PC-3 (cell line): ENCODE measurements at regions of chr7 and their contacts with region 1.

Region 1: DNA sequence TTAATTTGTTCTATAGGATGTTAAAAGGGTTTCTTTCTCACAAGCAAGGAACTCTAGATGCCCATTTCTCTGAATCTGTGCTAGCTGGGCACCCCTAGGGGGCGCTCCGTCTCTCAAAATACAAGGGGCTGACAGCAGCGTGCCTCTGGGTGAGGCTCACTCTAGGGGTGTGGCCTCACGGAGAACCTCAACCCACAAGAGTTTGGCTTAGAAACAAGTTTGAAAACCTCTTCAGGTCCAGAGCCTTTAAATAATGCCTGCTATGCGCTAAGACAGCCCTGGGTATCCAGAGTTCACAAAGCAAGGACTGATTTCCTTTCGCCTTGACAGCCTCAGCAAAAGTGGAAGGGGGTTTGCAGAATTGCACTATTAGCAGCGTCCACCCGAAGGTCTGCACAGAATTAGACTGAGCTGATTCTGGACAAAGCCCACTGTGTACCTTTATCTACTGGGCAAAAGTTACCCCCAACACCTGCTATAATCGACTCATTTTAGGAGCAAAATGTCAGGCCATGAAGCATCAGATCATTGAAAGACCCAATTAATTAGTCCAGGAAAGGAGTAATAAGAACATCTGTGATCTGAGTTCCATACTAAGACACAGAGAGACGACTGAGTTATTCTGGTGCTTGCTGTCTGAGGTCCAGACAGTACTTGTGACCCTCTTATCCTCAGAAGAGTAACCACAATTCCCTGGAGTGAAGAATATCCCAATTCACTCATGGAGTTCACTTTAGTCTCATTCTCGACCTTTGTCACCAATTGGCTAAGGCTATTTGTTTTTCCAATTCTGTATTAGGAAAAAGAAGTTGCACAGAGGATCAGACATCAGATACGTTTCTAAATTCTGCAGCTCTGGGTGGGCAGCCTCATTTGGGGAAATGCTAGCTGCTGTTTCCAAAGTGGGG is 574 bp upstream of the CPED1 start:
- DNase-seq: peak; percentile 90
- ATAC-seq: peak; percentile 83
- H3K4me3 ChIP-seq: peak overlapping the region; percentile 67
- H3K27ac ChIP-seq: no peak overlapping the region
- H3K4me1 ChIP-seq: peaks cover 40% of the 10 kb centered on the region
- H3K27me3 ChIP-seq: no peaks in the 10 kb centered on the region
- CTCF ChIP-seq: peak; percentile 97

Region 2: DNA sequence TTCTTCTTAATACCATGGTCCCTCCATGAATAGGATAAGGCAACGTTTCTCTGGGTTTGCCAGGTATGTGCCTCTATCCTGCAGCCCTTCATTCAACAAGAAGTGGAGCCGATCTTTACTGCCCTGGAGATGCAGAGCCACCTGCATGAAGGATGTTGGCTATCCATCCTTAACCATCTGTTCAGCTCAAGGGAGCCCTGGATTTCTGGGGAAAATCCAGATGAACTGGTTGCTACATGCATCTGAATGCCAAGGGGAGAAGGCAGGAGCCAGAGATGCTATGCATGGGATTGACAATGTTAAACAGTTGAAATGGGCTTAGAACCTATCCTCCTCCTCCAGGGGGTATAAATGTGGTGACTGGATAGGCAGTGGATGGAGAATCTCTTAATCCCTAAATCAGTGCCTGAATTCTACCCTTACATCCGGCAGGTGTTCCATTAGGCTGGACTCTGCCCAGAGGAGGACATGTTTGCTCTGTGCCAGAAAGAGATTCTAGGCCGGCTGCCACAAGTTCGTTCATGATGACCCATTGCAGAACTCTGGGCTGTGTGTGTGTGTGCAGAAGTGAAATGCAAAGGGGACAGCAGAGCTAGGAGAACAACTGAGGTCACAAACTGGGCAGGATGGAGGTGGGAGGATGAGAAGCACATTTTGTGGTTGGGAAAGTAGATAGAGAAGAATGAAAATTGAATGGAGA is 16.2 kb after region 1 on chr7:
- CTCF ChIA-PET with region 1: interaction called, 3 read pairs
- POLR2A ChIA-PET with region 1: no interaction called
- intact Hi-C with region 1: loop called (anchors 1 kb)
- DNase-seq: no peak
- ATAC-seq: no peak
- H3K4me3 ChIP-seq: no peak overlapping the region
- H3K27ac ChIP-seq: no peak overlapping the region
- H3K4me1 ChIP-seq: peaks cover 29% of the 10 kb centered on the region
- H3K27me3 ChIP-seq: no peaks in the 10 kb centered on the region
- CTCF ChIP-seq: no peak

Region 3: DNA sequence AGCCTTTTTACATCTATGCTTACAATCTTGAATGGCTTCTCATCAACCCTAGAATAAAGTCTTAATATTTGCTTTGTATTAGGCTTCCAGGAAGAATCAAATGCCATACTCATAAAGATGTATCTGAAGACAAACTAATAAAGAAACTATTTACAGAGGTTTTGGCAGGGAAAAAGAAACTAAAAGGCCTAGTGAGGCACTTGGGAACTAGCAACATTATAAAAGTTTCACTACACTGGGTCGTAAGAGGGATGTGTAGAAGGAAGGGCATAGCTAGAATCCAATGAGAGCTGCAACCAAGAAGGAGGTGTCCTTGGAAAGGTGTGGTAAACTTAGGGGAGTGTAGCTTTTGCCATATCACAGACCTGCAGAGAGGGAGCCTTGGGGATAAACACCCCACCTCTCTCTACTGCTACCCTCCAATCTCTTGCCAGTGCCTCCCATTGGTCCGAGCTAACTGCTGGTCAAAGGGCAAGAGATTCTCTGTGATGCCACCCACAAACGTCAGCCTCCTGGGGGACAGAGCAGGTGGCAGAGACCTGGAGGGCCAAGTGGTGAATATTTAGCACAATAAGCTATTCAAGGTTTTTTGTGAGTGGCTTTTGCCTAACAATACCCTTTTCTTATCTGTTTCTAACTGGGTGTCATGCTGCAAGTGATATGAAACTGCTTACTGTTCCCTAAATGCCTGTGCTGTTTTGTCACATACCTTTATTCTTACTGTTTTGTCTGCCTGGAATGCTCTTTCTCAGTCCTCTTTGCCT is 61.3 kb after region 1 on chr7:
- CTCF ChIA-PET with region 1: no interaction called
- POLR2A ChIA-PET with region 1: no interaction called
- intact Hi-C with region 1: loop called (anchors 1 kb)
- DNase-seq: peak; percentile 16
- ATAC-seq: peak; percentile 80
- H3K4me3 ChIP-seq: no peak overlapping the region
- H3K27ac ChIP-seq: no peak overlapping the region
- H3K4me1 ChIP-seq: peaks cover 3% of the 10 kb centered on the region; the same call in 1 of the 2 replicates
- H3K27me3 ChIP-seq: no peaks in the 10 kb centered on the region
- CTCF ChIP-seq: no peak

Region 4: DNA sequence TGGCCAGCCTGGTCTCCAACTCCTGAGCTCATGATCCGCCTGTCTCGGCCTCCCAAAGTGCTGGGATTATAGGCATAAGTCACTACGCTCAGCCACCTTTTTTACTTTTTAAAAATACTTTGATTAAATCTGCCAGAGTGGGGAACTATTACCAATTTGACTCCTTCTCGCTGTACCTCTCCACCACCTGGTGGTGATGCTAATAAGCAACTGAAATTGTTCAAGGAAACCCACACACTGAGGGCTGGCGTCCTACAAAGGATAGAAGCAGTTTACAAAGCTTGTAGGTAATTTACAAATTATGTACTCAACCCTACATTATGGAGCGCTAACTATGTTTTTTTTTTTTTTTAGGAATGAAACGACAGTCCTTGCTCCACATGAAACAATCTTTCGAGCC is 111.6 kb after region 1 on chr7:
- CTCF ChIA-PET with region 1: interaction called, 3 read pairs
- POLR2A ChIA-PET with region 1: no interaction called
- intact Hi-C with region 1: loop called (anchors 1 kb)
- DNase-seq: peak; percentile 56
- ATAC-seq: peak; percentile 61
- H3K4me3 ChIP-seq: no peak overlapping the region
- H3K27ac ChIP-seq: no peak overlapping the region
- H3K4me1 ChIP-seq: peaks cover 21% of the 10 kb centered on the region
- H3K27me3 ChIP-seq: no peaks in the 10 kb centered on the region
- CTCF ChIP-seq: peak; percentile 53; the same call in 1 of the 2 replicates

Region 5: DNA sequence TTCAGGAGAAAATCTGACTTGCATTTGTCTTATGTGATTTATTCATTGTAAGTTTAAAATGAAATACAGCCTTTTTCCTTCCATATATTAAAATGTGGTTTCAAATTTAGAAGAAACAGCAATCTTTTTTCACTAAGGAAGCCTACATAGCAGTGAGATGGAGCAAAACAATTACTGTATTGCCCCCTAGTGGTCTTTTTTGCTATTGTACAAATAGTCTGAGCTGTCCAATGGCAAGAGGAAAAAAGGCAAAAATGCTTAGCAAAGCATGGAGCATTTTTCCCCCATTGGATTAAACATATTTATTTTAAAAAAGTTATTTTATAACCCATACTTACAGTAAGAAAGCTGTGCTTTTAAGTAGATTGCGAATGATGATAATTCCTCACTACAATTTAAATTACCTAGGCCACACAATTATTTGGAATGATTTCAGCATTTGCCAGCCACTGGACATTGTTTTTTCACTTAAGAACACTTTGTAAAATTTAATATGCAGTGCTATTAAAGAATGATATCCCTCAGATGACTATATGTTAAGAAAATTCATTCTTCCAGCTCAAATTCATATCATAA is 120.1 kb after region 1 on chr7:
- CTCF ChIA-PET with region 1: interaction called, 3 read pairs
- POLR2A ChIA-PET with region 1: no interaction called
- intact Hi-C with region 1: loop called (anchors 1 kb)
- DNase-seq: peak; percentile 87
- ATAC-seq: peak; percentile 98
- H3K4me3 ChIP-seq: no peak overlapping the region
- H3K27ac ChIP-seq: no peak overlapping the region
- H3K4me1 ChIP-seq: peaks cover 17% of the 10 kb centered on the region
- H3K27me3 ChIP-seq: no peaks in the 10 kb centered on the region
- CTCF ChIP-seq: peak; percentile 86

Region 6: GRCh38 chr7:121329191-121330052 is 341.5 kb after region 1 on chr7:
- CTCF ChIA-PET with region 1: no interaction called
- POLR2A ChIA-PET with region 1: no interaction called
- intact Hi-C with region 1: loop called (anchors 10 kb)
- DNase-seq: no peak
- ATAC-seq: no peak
- H3K4me3 ChIP-seq: no peak overlapping the region
- H3K27ac ChIP-seq: no peak overlapping the region
- H3K4me1 ChIP-seq: no peaks in the 10 kb centered on the region
- H3K27me3 ChIP-seq: peaks cover 49% of the 10 kb centered on the region
- CTCF ChIP-seq: no peak